CD14-positive monocyte (primary cell): ENCODE measurements at regions of chr18 and their contacts with region 1.

Region 1: DNA sequence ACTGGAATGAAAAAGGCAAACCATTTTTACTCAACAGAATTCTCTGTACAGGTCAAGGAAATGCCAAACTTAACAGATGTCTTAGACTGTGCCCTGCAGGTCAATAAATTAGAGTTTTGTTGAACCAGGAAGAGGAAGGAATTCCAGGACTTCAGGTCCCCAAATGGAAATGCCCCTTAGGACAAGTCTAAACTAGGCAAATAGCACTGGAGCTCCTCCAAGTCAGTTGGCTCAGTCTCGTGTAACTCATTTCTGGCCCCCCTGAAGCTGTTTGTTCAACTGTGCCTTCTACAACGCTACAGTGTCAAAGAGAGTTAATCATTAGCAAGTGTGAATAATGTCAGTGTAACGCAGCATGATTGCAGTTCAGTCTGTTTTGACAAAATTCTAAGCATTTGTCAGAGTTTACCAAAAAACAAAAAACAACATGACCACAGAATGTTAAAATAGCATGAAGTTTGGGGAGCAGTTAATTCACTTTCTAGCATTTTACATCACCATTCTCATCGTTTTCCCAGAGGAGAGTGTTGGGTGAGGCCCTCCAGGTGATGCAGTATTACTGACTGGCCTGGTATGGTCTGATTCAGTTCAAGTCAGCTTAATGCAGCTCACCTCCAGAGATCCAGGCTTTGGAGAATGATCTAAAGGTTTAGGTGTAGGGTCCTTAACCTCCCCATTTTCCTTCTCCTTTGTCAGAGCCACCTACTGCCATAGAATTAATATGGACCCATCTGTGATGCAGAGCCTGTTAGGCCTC is 108.1 kb downstream of the AQP4 start:
- DNase-seq: no peak
- H3K4me3 ChIP-seq: no peak overlapping the region
- H3K4me3 Mint-ChIP-seq: no peak overlapping the region
- H3K27ac ChIP-seq: no peak overlapping the region
- H3K27ac Mint-ChIP-seq: no peak overlapping the region
- H3K4me1 ChIP-seq: peaks cover 5 to 7% of the 10 kb centered on the region in 2 donors
- H3K4me1 Mint-ChIP-seq: peaks cover 23% of the 10 kb centered on the region
- H3K27me3 ChIP-seq: no peaks in the 10 kb centered on the region
- H3K27me3 Mint-ChIP-seq: peaks cover 0 to 6% (median 0%) of the 10 kb centered on the region in 3 donors
- CTCF ChIP-seq: no peak

Region 2: GRCh38 chr18:26703170-26703930 is 54.1 kb before region 1 on chr18:
- intact Hi-C with region 1: loop called in 1 of 2 experiments (anchors 10 kb)
- DNase-seq: no peak
- H3K4me3 ChIP-seq: no peak overlapping the region
- H3K4me3 Mint-ChIP-seq: no peak overlapping the region
- H3K27ac ChIP-seq: no peak overlapping the region
- H3K27ac Mint-ChIP-seq: no peak overlapping the region
- H3K4me1 ChIP-seq: peaks cover 71 to 73% of the 10 kb centered on the region in 2 donors
- H3K4me1 Mint-ChIP-seq: peaks cover 51% of the 10 kb centered on the region
- H3K27me3 ChIP-seq: no peaks in the 10 kb centered on the region
- H3K27me3 Mint-ChIP-seq: peaks cover 0 to 2% (median 0%) of the 10 kb centered on the region in 3 donors
- CTCF ChIP-seq: no peak